ENCODE measurements at regions of chr15 and their contacts with region 1.

Region 1: DNA sequence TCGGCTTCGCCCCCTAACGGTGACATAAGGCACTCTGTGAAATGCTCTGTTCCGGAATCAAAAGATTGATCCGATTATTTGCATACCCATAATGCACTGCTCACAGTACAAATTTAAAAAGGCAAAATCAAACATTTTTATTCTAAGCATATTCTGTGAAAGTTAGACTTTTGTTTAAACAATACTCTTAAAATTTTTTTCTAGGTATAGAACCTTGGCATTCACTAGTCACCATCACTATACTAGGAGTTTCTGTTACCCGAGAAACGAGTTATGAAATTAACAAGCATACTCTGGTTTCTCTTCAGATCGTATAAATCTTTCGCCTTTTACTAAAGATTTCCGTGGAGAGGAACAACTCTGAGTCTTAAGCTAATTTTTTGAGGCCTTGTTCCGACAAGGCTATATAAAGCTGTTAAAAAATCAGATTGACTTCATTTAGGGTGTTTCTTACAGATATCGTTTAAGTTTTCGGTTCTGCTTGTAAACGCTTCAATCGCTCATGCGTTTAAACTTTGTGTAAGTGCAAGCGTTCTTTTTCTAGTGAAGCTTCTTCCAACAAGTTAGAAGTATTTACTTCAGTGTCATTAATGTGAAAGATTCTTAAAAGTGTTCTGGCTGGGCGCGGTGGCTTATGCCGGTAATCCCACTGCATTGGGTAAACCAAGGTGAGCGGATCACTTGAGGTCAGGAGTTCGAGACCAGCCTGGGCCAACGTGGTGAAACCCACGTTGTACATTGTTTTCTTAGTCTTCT is at the start of gene RNU5B-1:
- DNase-seq: peak; percentile 41 to 93 (median 72)
- ATAC-seq: peak; percentile 79
- H3K4me3 ChIP-seq: peak within 1 kb of the TSS; percentile 62 to 64
- H3K4me3 Mint-ChIP-seq: peak within 1 kb of the TSS; percentile 94
- H3K27ac ChIP-seq: peak within 1 kb of the TSS; percentile 90 to 98
- H3K27ac Mint-ChIP-seq: peak within 1 kb of the TSS; percentile 98
- H3K4me1 ChIP-seq: peaks cover 10% of the 10 kb centered on the region
- H3K4me1 Mint-ChIP-seq: peaks cover 41% of the 10 kb centered on the region
- H3K27me3 ChIP-seq: no peaks in the 10 kb centered on the region
- H3K27me3 Mint-ChIP-seq: no peaks in the 10 kb centered on the region
- CTCF ChIP-seq: peak; percentile 43
- total RNA-seq, gene RNU5B-1: 17.0 to 36.6 TPM

Region 2: DNA sequence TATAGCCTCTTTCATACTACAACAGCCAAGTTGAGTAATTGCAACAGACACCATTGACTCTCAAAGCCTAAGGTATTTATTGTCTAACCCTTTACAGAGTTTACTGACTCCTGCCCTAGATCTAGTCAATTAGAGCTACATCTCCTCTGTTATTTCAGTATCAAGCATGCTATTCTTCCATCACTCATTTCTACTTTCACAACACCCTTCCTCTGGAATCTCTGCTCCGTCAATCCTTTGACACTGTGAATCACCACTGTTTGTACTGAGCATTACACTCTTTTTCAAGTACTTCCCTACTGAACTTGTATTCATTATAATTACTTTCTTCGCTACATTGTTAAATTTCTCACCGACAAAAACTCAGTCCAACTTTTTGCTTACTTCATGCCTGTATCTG is 722.4 kb before region 1 on chr15:
- CTCF ChIA-PET with region 1: no interaction called
- POLR2A ChIA-PET with region 1: no interaction called
- intact Hi-C with region 1: no loop called
- DNase-seq: no peak
- ATAC-seq: no peak
- H3K4me3 ChIP-seq: no peak overlapping the region
- H3K4me3 Mint-ChIP-seq: no peak overlapping the region
- H3K27ac ChIP-seq: no peak overlapping the region
- H3K27ac Mint-ChIP-seq: peak overlapping the region; percentile 6
- H3K4me1 ChIP-seq: peaks cover 23% of the 10 kb centered on the region
- H3K4me1 Mint-ChIP-seq: peaks cover 43% of the 10 kb centered on the region
- H3K27me3 ChIP-seq: no peaks in the 10 kb centered on the region
- H3K27me3 Mint-ChIP-seq: no peaks in the 10 kb centered on the region
- CTCF ChIP-seq: no peak

Region 3: DNA sequence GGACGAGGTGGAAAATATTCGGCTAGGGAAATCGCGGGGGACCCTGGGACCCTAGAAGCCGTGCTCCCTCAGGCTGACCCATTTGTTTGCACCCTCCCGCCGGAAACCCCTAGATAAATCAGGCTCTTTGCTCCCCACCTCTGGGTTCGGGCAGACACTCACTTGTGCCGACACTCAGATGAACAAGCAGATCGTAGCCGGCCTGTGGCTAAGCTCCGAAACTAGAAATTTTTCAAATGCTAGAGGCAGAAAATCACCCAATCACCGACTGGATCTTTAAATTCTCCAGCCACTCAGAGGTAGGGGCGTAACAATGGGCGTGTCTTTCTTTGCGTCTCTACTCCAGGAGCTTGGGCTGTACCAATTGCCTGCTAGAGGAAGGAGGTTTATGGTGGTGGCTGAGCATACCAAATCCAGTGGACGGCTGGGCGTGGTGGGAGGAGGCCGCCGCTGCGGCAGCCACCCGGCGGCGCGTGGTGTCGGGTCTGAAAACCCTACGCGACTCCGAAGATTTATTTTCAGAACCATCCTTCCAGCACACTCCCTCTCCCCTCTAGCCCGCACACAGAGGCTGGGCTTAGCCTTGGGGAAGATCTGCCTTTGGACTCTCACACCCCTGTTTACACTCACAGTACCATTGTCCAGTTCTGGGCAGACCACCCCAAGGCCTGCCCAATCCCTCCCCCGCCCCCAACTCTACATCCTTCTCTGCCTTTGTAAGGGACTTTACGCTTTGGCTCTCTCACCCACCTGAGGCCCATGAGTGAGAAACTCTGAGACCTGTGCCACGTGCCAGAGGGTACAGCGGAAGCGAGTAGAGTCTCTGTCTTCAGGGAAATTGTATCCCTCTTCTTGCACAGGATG is 478.9 kb before region 1 on chr15 and contains the start of gene PIF1:
- CTCF ChIA-PET with region 1: no interaction called
- POLR2A ChIA-PET with region 1: no interaction called
- intact Hi-C with region 1: loop called in 1 of 2 experiments (anchors 10 kb)
- DNase-seq: peak; percentile 67 to 97 (median 84)
- ATAC-seq: peak; percentile 97
- H3K4me3 ChIP-seq: peak within 1 kb of the TSS; percentile 41 to 47
- H3K4me3 Mint-ChIP-seq: peak within 1 kb of the TSS; percentile 88
- H3K27ac ChIP-seq: peak within 1 kb of the TSS in 1 of 2 experiments; percentile 64
- H3K27ac Mint-ChIP-seq: peak within 1 kb of the TSS; percentile 70
- H3K4me1 ChIP-seq: peaks cover 23% of the 10 kb centered on the region
- H3K4me1 Mint-ChIP-seq: peaks cover 32% of the 10 kb centered on the region
- H3K27me3 ChIP-seq: no peaks in the 10 kb centered on the region
- H3K27me3 Mint-ChIP-seq: peaks cover 14% of the 10 kb centered on the region
- CTCF ChIP-seq: no peak
- total RNA-seq, gene PIF1: 0.50 to 0.76 TPM

Region 4: GRCh38 chr15:65133548-65134200 is 170.9 kb before region 1 on chr15 and contains the start of gene PDCD7:
- CTCF ChIA-PET with region 1: no interaction called
- POLR2A ChIA-PET with region 1: interaction called, 5 read pairs
- intact Hi-C with region 1: loop called (anchors 1 kb)
- DNase-seq: peak; percentile 60 to 95 (median 86)
- ATAC-seq: peak; percentile 93
- H3K4me3 ChIP-seq: peak within 1 kb of the TSS; percentile 62 to 78
- H3K4me3 Mint-ChIP-seq: peak within 1 kb of the TSS; percentile 91
- H3K27ac ChIP-seq: peak within 1 kb of the TSS; percentile 80 to 83
- H3K27ac Mint-ChIP-seq: peak within 1 kb of the TSS; percentile 96
- H3K4me1 ChIP-seq: peaks cover 26% of the 10 kb centered on the region
- H3K4me1 Mint-ChIP-seq: peaks cover 31% of the 10 kb centered on the region
- H3K27me3 ChIP-seq: no peaks in the 10 kb centered on the region
- H3K27me3 Mint-ChIP-seq: no peaks in the 10 kb centered on the region
- CTCF ChIP-seq: no peak
- total RNA-seq, gene PDCD7: 20.7 to 21.7 TPM

Region 5: GRCh38 chr15:65318870-65319356 is 14.3 kb after region 1 on chr15:
- CTCF ChIA-PET with region 1: interaction called, 18 read pairs
- POLR2A ChIA-PET with region 1: interaction called, 9 read pairs
- intact Hi-C with region 1: no loop called
- DNase-seq: peak; percentile 60 to 83 (median 75)
- ATAC-seq: peak; percentile 100
- H3K4me3 ChIP-seq: no peak overlapping the region
- H3K4me3 Mint-ChIP-seq: no peak overlapping the region
- H3K27ac ChIP-seq: no peak overlapping the region
- H3K27ac Mint-ChIP-seq: no peak overlapping the region
- H3K4me1 ChIP-seq: no peaks in the 10 kb centered on the region
- H3K4me1 Mint-ChIP-seq: peaks cover 2% of the 10 kb centered on the region
- H3K27me3 ChIP-seq: no peaks in the 10 kb centered on the region
- H3K27me3 Mint-ChIP-seq: peaks cover 4% of the 10 kb centered on the region
- CTCF ChIP-seq: peak; percentile 86

Region 6: DNA sequence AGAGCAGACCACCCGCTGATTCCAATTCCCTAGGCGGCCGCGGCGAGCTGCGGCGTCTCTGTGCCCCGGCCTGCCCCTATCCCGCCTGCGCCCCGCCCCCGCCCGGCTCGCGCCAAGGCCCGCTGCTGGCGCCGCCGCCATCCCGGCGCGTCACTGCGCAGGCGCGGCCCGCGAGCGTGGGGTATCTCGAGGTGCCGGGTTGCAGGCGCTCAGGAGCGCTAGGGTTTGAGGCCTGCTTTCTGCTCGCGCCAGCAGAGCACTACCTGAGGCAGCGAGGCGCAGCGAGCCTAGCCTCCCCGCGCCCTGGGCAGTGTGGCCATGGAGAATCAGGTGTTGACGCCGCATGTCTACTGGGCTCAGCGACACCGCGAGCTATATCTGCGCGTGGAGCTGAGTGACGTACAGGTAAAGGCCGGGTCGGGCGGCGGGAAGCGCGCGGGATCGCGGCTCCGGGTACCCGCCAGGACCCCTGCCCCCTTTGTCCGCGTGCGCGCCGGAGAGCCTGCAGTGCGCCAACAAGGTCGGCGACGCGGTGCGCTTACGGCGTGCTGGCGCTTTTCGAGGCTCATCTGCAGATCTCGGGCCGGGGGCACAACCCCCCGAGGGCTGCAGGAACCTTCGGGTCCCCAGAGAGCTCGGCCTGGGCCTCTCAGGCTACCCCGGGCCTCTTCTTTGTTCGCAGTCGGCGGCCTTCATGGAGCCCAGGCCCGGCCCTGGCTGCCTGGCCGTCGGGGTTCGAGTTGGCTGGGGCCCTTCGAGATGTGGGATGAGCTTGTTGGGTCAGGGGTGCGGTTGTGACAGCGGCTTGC is 226.0 kb after region 1 on chr15 and contains the start of gene HACD3:
- CTCF ChIA-PET with region 1: no interaction called
- POLR2A ChIA-PET with region 1: no interaction called
- intact Hi-C with region 1: loop called in 1 of 2 experiments (anchors 5 kb)
- DNase-seq: peak; percentile 75 to 93 (median 88)
- ATAC-seq: peak; percentile 96
- H3K4me3 ChIP-seq: peak within 1 kb of the TSS; percentile 67 to 97
- H3K4me3 Mint-ChIP-seq: peak within 1 kb of the TSS; percentile 88
- H3K27ac ChIP-seq: peak within 1 kb of the TSS; percentile 68 to 76
- H3K27ac Mint-ChIP-seq: peak within 1 kb of the TSS; percentile 91
- H3K4me1 ChIP-seq: peaks cover 20% of the 10 kb centered on the region
- H3K4me1 Mint-ChIP-seq: peaks cover 39% of the 10 kb centered on the region
- H3K27me3 ChIP-seq: no peaks in the 10 kb centered on the region
- H3K27me3 Mint-ChIP-seq: no peaks in the 10 kb centered on the region
- CTCF ChIP-seq: no peak
- total RNA-seq, gene HACD3: 16.8 to 17.0 TPM